Activated B cell treated with CpG ODN at 0.5 μM for 24 hours (primary cell): ENCODE measurements at regions of chr16 and their contacts with region 1.

Region 1: DNA sequence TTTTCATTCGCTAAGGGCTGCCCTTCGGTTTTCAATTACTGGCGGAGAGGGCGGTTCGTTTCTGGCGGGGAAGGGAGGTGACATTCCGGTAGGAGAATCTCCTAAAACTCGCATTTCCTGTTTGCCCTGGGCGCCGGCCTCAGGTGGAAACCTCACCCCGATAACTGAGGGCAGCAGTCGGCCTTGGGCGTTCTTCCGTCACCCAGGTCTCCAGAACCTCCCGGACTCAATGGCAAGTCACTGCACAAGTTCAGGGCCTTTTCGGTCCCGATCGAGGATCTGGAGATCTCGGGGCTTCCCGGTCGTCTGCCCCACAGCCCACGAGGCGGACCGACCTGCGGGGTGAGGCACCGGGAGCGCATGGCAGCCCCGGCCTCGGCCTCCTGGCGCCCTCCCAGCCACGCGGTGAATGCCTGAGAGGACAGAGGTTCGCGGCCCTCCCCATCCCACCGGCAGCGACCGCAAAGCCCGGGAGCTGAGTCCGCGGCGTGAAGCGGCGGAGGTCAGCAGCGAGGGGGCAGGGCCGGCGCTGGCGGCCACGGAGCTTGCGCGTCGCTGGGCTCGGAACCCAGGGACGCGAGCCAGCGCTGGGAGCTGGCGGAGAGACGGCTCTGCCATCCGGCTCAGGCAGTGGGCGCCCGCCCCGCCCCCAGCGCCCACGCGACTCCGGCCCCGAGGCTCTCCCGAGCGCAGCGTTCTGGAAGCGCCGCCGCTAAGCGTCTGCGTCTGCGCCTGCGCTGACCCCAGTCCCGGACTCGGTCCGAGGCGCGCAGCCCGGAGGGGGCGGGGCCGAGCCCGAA is 58.4 kb downstream of the SRL start:
- DNase-seq: peak; percentile 92
- ATAC-seq: peak; percentile 96
- H3K4me3 Mint-ChIP-seq: peak overlapping the region; percentile 81
- H3K27ac Mint-ChIP-seq: peak overlapping the region; percentile 30
- H3K4me1 Mint-ChIP-seq: peaks cover 5% of the 10 kb centered on the region
- H3K27me3 Mint-ChIP-seq: peaks cover 2% of the 10 kb centered on the region
- CTCF ChIP-seq: no peak

Region 2: GRCh38 chr16:4116337-4117249 is 66.8 kb before region 1 on chr16 and contains the start of gene ADCY9:
- CTCF ChIA-PET with region 1: no interaction called
- POLR2A ChIA-PET with region 1: no interaction called
- intact Hi-C with region 1: loop called (anchors 5 kb)
- DNase-seq: peak; percentile 73
- ATAC-seq: peak; percentile 84
- H3K4me3 Mint-ChIP-seq: peak within 1 kb of the TSS; percentile 82
- H3K27ac Mint-ChIP-seq: no peak within 1 kb of the TSS
- H3K4me1 Mint-ChIP-seq: peaks cover 8% of the 10 kb centered on the region
- H3K27me3 Mint-ChIP-seq: peaks cover 4% of the 10 kb centered on the region
- CTCF ChIP-seq: no peak
- total RNA-seq, gene ADCY9: 1.3 and 2.0 TPM in 2 replicates

Region 3: DNA sequence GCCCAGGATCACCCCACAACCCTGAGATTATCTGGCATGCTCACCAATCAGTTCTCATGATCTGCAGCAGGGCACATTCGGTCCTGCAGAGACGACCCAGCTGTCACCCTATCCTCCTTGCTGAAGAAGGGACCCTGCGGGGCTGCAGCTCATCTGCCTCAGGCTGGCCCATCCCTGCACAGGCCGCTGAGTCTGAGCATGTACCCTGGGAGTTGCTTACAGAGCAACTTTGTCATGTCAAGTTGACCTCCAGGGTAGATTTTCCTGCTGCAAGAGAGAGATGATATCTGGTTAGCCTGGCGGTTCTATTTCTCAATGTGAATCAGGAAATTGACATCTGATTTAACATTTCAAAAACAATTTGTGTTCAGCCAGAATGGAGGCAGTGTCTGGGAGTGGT is 31.2 kb before region 1 on chr16:
- CTCF ChIA-PET with region 1: no interaction called
- POLR2A ChIA-PET with region 1: no interaction called
- intact Hi-C with region 1: no loop called
- DNase-seq: no peak
- ATAC-seq: no peak
- H3K4me3 Mint-ChIP-seq: no peak overlapping the region
- H3K27ac Mint-ChIP-seq: no peak overlapping the region
- H3K4me1 Mint-ChIP-seq: no peaks in the 10 kb centered on the region
- H3K27me3 Mint-ChIP-seq: peaks cover 3% of the 10 kb centered on the region
- CTCF ChIP-seq: no peak

Region 4: GRCh38 chr16:4271176-4272066 is 88.0 kb after region 1 on chr16:
- CTCF ChIA-PET with region 1: no interaction called
- POLR2A ChIA-PET with region 1: no interaction called
- intact Hi-C with region 1: loop called (anchors 1 kb)
- DNase-seq: peak; percentile 82
- ATAC-seq: peak; percentile 81
- H3K4me3 Mint-ChIP-seq: peak overlapping the region; percentile 86
- H3K27ac Mint-ChIP-seq: peak overlapping the region; percentile 88
- H3K4me1 Mint-ChIP-seq: peaks cover 11% of the 10 kb centered on the region
- H3K27me3 Mint-ChIP-seq: no peaks in the 10 kb centered on the region
- CTCF ChIP-seq: no peak